BJ (cell line): ENCODE measurements at regions of chr22 and their contacts with region 1.

Region 1: GRCh38 chr22:30005213-30005857 is 74.9 kb upstream of the HORMAD2 start:
- DNase-seq: no peak
- H3K4me3 ChIP-seq: no peak overlapping the region
- H3K27me3 ChIP-seq: no peaks in the 10 kb centered on the region
- CTCF ChIP-seq: peak; percentile 99

Region 2: GRCh38 chr22:29772170-29772641 is 233.1 kb before region 1 on chr22:
- CTCF ChIA-PET with region 1: interaction called, 19 read pairs
- POLR2A ChIA-PET with region 1: no interaction called
- DNase-seq: no peak
- H3K4me3 ChIP-seq: no peak overlapping the region
- H3K27me3 ChIP-seq: no peaks in the 10 kb centered on the region
- CTCF ChIP-seq: peak; percentile 64

Region 3: GRCh38 chr22:29979777-29980321 is 25.5 kb before region 1 on chr22:
- CTCF ChIA-PET with region 1: interaction called, 12 read pairs
- POLR2A ChIA-PET with region 1: no interaction called
- DNase-seq: peak; percentile 25
- H3K4me3 ChIP-seq: no peak overlapping the region
- H3K27me3 ChIP-seq: no peaks in the 10 kb centered on the region
- CTCF ChIP-seq: no peak

Region 4: DNA sequence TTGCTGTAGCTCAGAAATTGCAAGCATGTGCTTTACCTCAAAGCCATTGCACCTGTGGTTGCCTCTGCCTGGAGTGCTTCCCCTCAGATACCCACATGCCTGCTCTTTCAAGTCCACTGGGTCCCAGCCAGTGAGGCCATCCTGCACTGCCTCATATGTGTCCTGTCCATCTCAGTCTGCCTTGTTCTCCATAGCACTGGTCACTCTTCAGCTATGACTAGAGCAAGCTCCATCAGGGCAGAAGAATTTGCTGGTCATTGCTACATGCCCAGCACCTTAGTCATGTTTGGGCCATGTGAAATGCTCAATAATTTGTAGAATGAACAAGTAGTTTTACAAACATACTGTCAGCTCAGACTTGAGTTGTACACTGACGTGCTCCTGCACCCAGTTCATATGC is 10.5 kb after region 1 on chr22:
- CTCF ChIA-PET with region 1: interaction called, 25 read pairs
- POLR2A ChIA-PET with region 1: no interaction called
- DNase-seq: peak; percentile 55
- H3K4me3 ChIP-seq: no peak overlapping the region
- H3K27me3 ChIP-seq: no peaks in the 10 kb centered on the region
- CTCF ChIP-seq: no peak